Dorsolateral prefrontal cortex (tissue), 120 donors: ENCODE measurements at regions of chr1 and their contacts with region 1.

Region 1: GRCh38 chr1:30779294-30780071 is 21.9 kb upstream of the LAPTM5 start:
- DNase-seq: peak; percentile 50 to 94 (median 88)
- H3K4me3 ChIP-seq: no peak overlapping the region
- H3K27ac ChIP-seq: peak overlapping the region in 37 of 59 donors; percentile 7 to 90 (median 73)
- H3K27me3 ChIP-seq: no peaks in the 10 kb centered on the region
- CTCF ChIP-seq: peak in 55 of 56 donors; percentile 83 to 100 (median 97)

Region 2: DNA sequence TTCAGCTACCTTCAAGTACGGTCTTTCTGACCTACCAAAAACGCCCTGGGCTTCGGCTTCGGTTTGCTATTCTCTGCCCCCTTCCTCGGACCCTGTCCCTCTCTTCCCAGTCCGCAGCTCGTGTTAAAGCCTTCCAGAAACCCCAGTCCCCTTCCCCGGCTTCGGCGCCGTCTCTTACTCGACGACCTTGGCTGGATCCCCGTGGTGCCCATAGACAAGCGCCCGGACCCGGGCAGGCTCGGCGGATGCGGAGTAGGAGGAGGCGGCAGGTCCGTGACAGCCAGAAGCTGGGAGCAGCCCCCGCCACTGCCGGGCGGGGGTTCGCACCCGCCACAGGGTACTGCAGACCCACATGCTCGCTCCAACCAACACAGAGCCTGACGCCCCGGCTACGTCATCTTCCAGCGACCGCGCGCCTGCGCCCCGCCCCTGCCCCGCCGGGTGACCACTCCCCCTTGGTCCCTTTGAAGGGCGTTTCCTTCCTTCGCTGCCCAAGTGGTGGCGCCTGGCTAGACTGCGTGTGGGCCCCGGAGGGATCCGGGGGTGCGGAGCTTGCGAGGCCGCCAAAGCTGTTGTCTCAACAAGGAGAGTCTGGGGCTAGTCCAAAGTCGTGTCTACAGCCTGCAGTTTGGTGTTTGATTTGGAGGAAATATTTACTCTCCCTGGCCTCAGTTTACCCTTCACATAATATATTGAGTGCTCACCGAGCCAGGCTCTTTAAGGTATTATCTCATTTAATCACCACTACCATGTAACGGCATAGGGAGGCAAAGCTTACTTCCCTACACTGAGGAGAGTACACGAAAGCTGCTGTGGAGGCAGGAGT is 1548.7 kb before region 1 on chr1 and contains the start of gene MECR:
- intact Hi-C with region 1: loop called in 1 of 2 experiments (anchors 5 kb)
- DNase-seq: peak; percentile 92 to 98 (median 95)
- H3K4me3 ChIP-seq: peak within 1 kb of the TSS; percentile 59 to 97 (median 85)
- H3K27ac ChIP-seq: peak within 1 kb of the TSS in 44 of 59 donors; percentile 7 to 89 (median 66)
- H3K27me3 ChIP-seq: no peaks in the 10 kb centered on the region
- CTCF ChIP-seq: peak in 55 of 56 donors; percentile 18 to 70 (median 52)
- total RNA-seq, gene MECR: 28.4 to 65.3 (median 45.9) TPM

Region 3: GRCh38 chr1:30718636-30719405 is 60.7 kb before region 1 on chr1:
- intact Hi-C with region 1: loop called (anchors 1 kb)
- DNase-seq: peak in 5 of 10 donors; percentile 46 to 96 (median 86)
- H3K4me3 ChIP-seq: peak overlapping the region; percentile 51 to 88 (median 69)
- H3K27ac ChIP-seq: peak overlapping the region; percentile 91 to 100 (median 99)
- H3K27me3 ChIP-seq: no peaks in the 10 kb centered on the region
- CTCF ChIP-seq: peak in 55 of 56 donors; percentile 94 to 100 (median 99)

Region 4: DNA sequence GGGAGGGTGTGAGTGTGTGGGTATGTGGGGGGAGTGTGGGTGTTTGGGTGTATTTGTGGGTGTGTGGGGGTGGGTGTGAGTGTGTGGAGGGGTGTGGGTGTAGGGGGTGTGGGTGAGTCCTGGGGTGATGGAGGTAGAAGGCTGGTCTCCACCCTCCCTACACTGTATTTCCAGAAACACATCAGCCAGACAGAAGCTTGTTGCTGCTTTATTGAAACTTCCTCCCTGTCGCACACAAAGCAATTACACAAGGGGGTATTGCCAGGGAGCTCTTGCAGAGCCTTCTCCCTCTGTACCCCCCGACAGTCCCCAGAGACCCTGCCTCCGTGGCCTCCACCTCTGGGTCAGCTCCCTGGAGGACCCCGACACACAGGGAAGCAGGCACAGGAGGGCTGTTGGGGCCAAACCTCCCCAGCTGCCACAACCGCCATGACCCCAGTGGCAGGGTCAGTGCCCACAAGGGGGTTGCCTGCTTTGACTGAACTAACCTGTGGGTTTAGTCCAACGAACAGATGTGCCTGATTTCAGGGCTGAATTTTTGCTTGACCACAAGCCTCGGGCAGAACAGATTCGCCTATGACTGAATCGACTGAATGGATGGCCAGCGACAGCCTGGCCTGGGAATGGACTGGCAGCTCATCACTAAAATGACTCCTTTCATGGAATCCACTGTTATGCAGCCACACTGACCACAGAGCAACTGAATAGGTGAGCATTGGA is 47.0 kb before region 1 on chr1:
- intact Hi-C with region 1: no loop called
- DNase-seq: no peak
- H3K4me3 ChIP-seq: no peak overlapping the region
- H3K27ac ChIP-seq: peak overlapping the region in 38 of 59 donors; percentile 2 to 81 (median 58)
- H3K27me3 ChIP-seq: no peaks in the 10 kb centered on the region
- CTCF ChIP-seq: no peak

Region 5: GRCh38 chr1:30801771-30802198 is 22.3 kb after region 1 on chr1:
- intact Hi-C with region 1: loop called in 1 of 2 experiments (anchors 1 kb)
- DNase-seq: peak; percentile 78 to 93 (median 88)
- H3K4me3 ChIP-seq: peak overlapping the region in 50 of 59 donors; percentile 8 to 60 (median 39)
- H3K27ac ChIP-seq: peak overlapping the region in 26 of 59 donors; percentile 1 to 84 (median 55)
- H3K27me3 ChIP-seq: no peaks in the 10 kb centered on the region
- CTCF ChIP-seq: peak; percentile 74 to 99 (median 97)

Region 6: GRCh38 chr1:30911046-30911954 is 131.8 kb after region 1 on chr1:
- intact Hi-C with region 1: loop called (anchors 1 kb)
- DNase-seq: peak; percentile 78 to 91 (median 88)
- H3K4me3 ChIP-seq: no peak overlapping the region
- H3K27ac ChIP-seq: peak overlapping the region in 20 of 59 donors; percentile 1 to 79 (median 46)
- H3K27me3 ChIP-seq: no peaks in the 10 kb centered on the region
- CTCF ChIP-seq: peak; percentile 83 to 99 (median 95)

Region 7: GRCh38 chr1:31155216-31155841 is 375.8 kb after region 1 on chr1:
- intact Hi-C with region 1: loop called in 1 of 2 experiments (anchors 10 kb)
- DNase-seq: peak in 8 of 10 donors; percentile 12 to 70 (median 40)
- H3K4me3 ChIP-seq: peak overlapping the region; percentile 58 to 88 (median 69)
- H3K27ac ChIP-seq: peak overlapping the region in 17 of 59 donors; percentile 0 to 76 (median 46)
- H3K27me3 ChIP-seq: no peaks in the 10 kb centered on the region
- CTCF ChIP-seq: peak in 43 of 56 donors; percentile 9 to 46 (median 25)